ENCODE measurements at regions of chr2 and their contacts with region 1.

Region 1: DNA sequence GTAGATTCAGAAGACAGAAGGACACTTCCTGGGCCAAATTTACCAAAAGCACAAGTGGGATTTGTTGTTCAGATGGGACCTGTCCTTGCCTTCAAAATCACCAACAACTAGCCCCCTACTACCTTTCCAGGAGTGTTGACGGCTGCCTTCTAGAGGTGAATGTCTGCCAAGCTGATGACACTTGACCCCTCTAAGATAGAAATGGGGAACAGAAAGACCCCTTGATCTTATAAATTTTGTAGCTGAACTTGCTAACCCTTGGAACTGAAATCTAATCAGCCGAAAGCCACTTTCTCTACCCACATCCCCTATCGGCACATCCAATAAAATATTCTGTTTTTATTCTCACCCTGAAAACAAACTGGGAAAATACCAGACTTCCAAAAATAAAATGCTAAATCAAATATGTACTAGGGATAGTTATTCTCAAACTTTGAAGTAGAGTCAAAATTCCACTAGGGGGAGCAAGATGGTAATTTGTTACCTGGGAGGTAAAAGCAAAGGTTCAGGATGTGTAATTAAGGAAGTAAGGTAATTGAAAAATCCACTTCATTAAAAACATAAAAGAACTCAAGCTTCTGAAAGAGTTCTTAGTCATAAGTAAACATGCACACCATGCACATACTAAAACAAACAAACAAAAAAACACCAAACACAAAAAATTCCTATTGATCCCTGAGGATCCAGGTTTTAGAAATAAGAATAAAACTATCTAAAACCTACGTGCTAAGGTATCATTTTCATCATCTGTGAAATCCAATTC is 119.2 kb downstream of the ANKRD44 start:
- DNase-seq: no peak
- ATAC-seq: no peak
- H3K4me3 ChIP-seq: no peak overlapping the region
- H3K27ac ChIP-seq: no peak overlapping the region
- H3K4me1 ChIP-seq: peaks cover 4% of the 10 kb centered on the region
- H3K27me3 ChIP-seq: no peaks in the 10 kb centered on the region

Region 2: DNA sequence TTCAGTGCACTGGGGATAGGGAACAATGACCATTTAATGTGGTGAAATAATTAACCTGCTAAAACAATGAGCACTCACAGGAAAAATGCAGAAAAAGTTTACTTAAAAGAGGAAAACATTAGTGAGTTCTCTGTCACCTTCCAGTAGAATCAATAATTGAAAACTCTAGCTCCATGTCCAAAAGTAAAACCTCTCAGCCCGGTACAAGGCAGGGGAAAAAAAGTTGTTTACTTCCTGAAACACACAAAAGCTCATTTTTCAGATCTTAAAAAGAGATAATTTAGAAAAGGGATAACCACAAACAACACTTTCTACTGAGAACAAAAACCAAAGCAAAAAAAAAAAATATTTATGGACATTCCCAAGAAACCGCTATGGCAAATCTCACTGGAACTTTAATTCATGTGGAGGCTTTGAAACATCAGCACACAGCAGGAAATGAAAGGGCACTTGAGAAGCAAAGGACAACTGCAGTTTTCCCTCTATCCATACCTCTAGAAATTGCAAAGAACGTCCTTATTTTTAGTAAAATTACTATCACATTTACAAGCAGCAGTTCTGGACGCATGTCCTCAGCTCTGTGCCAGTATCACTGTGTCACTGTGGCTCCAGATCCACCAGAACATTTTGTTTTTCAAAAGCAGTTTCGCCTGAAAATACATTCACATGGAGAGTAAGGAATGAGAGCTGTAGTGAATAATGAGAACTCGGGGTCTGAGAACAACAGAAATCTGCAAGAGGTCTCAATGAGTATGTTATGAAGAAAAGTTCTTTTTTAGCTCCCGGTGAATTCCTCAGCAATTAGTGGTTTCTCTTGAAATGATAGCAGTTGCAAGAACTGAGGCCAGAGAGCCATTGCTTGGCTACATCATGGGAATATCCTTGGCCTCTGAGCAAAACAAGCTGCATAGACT is 1078.0 kb before region 1 on chr2:
- intact Hi-C with region 1: no loop called
- DNase-seq: peak in 1 of 3 donors; percentile 45
- ATAC-seq: peak in 1 of 2 donors; percentile 75
- H3K4me3 ChIP-seq: peak overlapping the region; percentile 2
- H3K27ac ChIP-seq: peak overlapping the region; percentile 81
- H3K4me1 ChIP-seq: no peaks in the 10 kb centered on the region
- H3K27me3 ChIP-seq: no peaks in the 10 kb centered on the region

Region 3: GRCh38 chr2:197124639-197125390 is 66.5 kb before region 1 on chr2:
- intact Hi-C with region 1: no loop called
- DNase-seq: no peak
- ATAC-seq: no peak
- H3K4me3 ChIP-seq: no peak overlapping the region
- H3K27ac ChIP-seq: no peak overlapping the region
- H3K4me1 ChIP-seq: no peaks in the 10 kb centered on the region
- H3K27me3 ChIP-seq: no peaks in the 10 kb centered on the region

Region 4: GRCh38 chr2:197363998-197364538 is 172.7 kb after region 1 on chr2:
- intact Hi-C with region 1: no loop called
- DNase-seq: no peak
- ATAC-seq: no peak
- H3K4me3 ChIP-seq: no peak overlapping the region
- H3K27ac ChIP-seq: no peak overlapping the region
- H3K4me1 ChIP-seq: no peaks in the 10 kb centered on the region
- H3K27me3 ChIP-seq: no peaks in the 10 kb centered on the region

Region 5: GRCh38 chr2:197378494-197379307 is 187.3 kb after region 1 on chr2:
- intact Hi-C with region 1: loop called in 3 of 4 experiments (anchors 5 to 10 kb)
- DNase-seq: peak in 1 of 3 donors; percentile 53
- ATAC-seq: peak; percentile 61 to 71
- H3K4me3 ChIP-seq: no peak overlapping the region
- H3K27ac ChIP-seq: no peak overlapping the region
- H3K4me1 ChIP-seq: no peaks in the 10 kb centered on the region
- H3K27me3 ChIP-seq: no peaks in the 10 kb centered on the region

Measured in right cardiac atrium (tissue), 5 donors.